ENCODE measurements at regions of chr2 and their contacts with region 1.

Region 1: GRCh38 chr2:219530048-219530963 is 13.3 kb downstream of the CHPF start:
- DNase-seq: no peak
- H3K4me3 ChIP-seq: peak overlapping the region; percentile 11; the same call in 1 of the 2 replicates
- H3K27me3 ChIP-seq: peaks cover 13% of the 10 kb centered on the region
- CTCF ChIP-seq: peak; percentile 96

Region 2: GRCh38 chr2:219430633-219431615 is 99.4 kb before region 1 on chr2:
- CTCF ChIA-PET with region 1: interaction called, 21 read pairs
- POLR2A ChIA-PET with region 1: no interaction called
- DNase-seq: no peak
- H3K4me3 ChIP-seq: no peak overlapping the region
- H3K27me3 ChIP-seq: 0 out of 2 replicates have a peak, but pooled peaks cover 2% of the 10 kb centered on the region
- CTCF ChIP-seq: peak; percentile 35; the same call in 1 of the 2 replicates

Region 3: DNA sequence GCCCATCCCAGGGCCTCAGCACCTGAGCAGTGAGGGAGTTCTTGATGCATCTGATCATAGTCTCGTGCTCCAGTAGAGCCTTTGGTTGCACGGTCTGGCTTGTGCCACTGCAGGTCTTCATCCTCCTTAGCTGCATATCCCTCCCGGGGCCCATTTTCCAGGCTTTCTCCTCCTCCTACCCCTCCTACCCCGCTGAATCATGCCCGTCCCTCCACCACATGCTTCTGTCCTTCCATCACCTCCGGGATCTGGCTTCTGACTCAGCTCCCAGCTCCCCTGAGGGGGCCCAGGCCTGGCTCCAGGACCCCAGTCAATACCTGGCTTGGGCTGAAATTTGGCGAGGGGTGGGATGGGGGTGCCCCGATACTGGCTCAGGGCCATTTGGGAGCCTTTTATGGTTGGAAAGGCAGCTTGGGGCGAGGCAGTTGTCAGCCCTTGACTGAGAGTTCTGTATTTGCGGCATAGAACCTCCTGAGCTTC is 77.4 kb before region 1 on chr2:
- CTCF ChIA-PET with region 1: interaction called, 10 read pairs
- POLR2A ChIA-PET with region 1: no interaction called
- DNase-seq: peak; percentile 78
- H3K4me3 ChIP-seq: no peak overlapping the region
- H3K27me3 ChIP-seq: no peaks in the 10 kb centered on the region
- CTCF ChIP-seq: no peak

Region 4: DNA sequence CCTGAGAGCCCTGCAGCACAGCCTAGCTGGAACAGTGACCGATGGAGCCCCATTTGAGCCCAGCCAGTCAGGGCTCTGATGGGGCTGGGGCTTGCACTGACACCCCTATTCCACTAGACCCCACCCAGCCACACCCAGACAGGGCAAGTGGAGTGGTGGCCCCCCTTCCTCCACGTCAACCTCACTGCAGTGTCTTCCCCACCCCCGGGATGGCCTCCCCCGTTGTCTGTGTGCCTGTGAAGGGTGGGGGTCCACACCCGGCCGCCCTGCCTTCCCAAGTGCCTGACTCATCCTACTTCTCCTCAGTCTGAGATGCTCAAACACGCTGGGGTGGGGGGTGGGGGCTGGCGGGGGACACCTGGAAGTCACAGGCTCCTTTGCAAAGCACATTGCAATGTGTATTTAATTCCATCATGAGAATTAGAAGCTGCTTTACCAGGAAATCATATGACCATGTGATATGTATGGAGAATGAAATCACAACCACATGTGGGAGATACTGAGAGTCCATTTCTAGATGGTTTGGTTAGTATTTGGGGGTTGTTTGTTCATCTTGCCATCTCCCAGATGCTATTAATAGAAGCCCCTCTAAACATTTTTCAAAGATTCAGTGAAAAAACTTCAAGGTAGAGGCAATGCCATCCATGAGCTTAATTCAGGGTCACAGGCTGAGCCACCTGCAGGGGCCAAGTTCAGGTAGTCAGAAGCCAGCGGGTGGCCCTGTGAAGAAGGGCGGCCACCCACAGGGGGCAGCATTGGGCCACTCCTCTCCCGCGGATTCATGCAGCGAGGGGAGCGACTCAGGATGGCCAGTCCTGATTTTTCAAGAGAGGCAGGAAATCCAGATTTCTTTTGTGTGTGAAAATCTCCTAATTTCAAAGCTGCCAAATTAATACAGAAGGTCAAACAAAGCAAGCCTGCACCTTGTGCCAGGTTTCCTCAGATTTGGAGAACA is 54.3 kb before region 1 on chr2:
- CTCF ChIA-PET with region 1: interaction called, 31 read pairs
- POLR2A ChIA-PET with region 1: no interaction called
- DNase-seq: no peak
- H3K4me3 ChIP-seq: no peak overlapping the region
- H3K27me3 ChIP-seq: no peaks in the 10 kb centered on the region
- CTCF ChIP-seq: peak; percentile 93